ENCODE measurements at regions of chrX and their contacts with region 1.

Region 1: GRCh38 chrX:13487731-13488523 is 81.5 kb upstream of the EGFL6 start:
- DNase-seq: peak; percentile 85
- H3K4me3 Mint-ChIP-seq: no peak overlapping the region
- H3K27ac Mint-ChIP-seq: peak overlapping the region; percentile 81
- H3K4me1 Mint-ChIP-seq: peaks cover 20% of the 10 kb centered on the region
- H3K27me3 Mint-ChIP-seq: no peaks in the 10 kb centered on the region

Region 2: GRCh38 chrX:12814420-12814819 is 673.5 kb before region 1 on chrX:
- intact Hi-C with region 1: loop called (anchors 10 kb)
- DNase-seq: peak; percentile 86
- H3K4me3 Mint-ChIP-seq: no peak overlapping the region
- H3K27ac Mint-ChIP-seq: no peak overlapping the region
- H3K4me1 Mint-ChIP-seq: peaks cover 23% of the 10 kb centered on the region
- H3K27me3 Mint-ChIP-seq: no peaks in the 10 kb centered on the region

Region 3: GRCh38 chrX:13257223-13258051 is 230.5 kb before region 1 on chrX:
- intact Hi-C with region 1: loop called (anchors 5 kb)
- DNase-seq: peak; percentile 60
- H3K4me3 Mint-ChIP-seq: peak overlapping the region; percentile 40
- H3K27ac Mint-ChIP-seq: peak overlapping the region; percentile 53
- H3K4me1 Mint-ChIP-seq: peaks cover 39% of the 10 kb centered on the region
- H3K27me3 Mint-ChIP-seq: no peaks in the 10 kb centered on the region

Region 4: GRCh38 chrX:13376857-13377549 is 110.9 kb before region 1 on chrX:
- intact Hi-C with region 1: loop called (anchors 5 kb)
- DNase-seq: no peak
- H3K4me3 Mint-ChIP-seq: no peak overlapping the region
- H3K27ac Mint-ChIP-seq: no peak overlapping the region
- H3K4me1 Mint-ChIP-seq: peaks cover 26% of the 10 kb centered on the region
- H3K27me3 Mint-ChIP-seq: no peaks in the 10 kb centered on the region

Region 5: DNA sequence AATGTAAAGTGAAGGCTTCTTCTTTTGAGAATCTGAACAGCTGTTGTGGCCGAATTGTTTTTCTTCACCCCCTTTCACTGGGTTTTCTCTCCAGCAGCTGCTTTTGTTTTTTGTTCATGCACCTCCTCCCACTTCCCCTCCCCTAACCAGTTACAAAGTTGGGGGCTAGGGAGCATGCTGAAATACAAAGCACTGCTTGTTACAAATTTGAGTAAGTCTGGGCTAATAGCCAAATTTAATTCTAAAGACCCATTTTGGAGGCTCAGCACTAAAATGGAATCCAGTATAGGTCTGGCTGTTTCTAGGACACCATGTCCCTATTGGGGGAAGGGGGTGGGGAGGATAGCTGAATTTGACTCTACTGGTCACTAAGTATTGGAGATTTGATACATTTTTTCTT is 418.2 kb after region 1 on chrX:
- intact Hi-C with region 1: no loop called
- DNase-seq: no peak
- H3K4me3 Mint-ChIP-seq: no peak overlapping the region
- H3K27ac Mint-ChIP-seq: no peak overlapping the region
- H3K4me1 Mint-ChIP-seq: no peaks in the 10 kb centered on the region
- H3K27me3 Mint-ChIP-seq: peaks cover 3% of the 10 kb centered on the region